ENCODE measurements at regions of chr2 and their contacts with region 1.

Region 1: DNA sequence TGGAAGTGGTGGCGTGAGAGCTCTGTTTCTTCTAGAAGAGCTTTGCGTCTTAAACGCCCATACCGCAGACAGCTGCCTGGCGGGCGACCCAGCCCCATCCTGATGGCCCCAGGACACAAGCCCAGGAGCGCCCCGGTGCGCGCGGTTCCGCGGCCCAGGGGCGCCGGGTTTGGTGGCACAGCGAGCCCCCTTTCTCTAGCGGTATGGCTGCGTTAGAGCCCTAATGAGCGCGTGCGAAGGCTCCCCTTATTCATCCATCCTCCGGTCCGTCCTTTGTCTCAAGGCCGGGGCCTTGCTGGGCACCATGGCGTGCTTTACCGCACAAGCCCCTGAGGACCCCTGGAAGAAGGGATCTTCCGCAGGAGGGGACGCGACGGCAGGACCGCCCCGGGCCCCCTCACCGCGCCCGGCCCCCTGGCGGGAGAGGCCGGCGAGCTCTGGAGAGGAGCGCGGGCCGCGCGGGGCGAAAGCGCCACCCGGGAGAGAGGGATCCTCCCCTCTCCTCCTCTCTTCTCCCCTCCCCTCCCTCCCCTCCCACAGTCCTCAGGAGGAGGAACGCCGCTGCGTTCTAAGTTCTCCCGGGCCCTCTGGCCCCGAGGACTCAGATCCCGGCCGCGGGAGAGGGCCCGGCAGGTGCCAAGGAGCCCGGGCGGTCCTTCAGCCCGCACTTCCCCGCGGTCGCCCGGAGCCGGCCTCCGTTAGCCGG is 626 bp upstream of the SLC1A4 start:
- DNase-seq: peak; percentile 77
- H3K4me3 ChIP-seq: peak overlapping the region; percentile 88
- H3K27ac ChIP-seq: peak overlapping the region; percentile 99
- H3K27me3 ChIP-seq: no peaks in the 10 kb centered on the region
- CTCF ChIP-seq: peak; percentile 54

Region 2: DNA sequence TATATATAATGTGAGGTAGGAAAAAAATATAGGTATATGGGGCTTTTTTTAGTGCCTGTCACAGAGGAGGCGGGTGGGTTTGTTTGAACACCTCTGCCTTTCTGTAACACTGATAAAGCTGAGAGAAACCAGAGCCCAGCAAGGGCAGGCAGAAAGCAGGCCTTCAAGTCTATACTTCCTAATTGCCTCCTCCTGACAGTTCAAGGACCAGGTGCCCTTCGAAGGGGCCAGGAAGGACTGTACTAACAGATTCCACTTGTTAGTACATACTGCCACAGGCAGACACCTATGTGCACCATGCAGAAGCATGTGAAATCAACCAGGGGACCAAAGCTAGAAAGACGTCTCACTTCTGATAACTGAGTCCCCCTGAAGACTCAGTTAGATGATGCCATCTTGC is 14.5 kb after region 1 on chr2:
- CTCF ChIA-PET with region 1: interaction called, 6 read pairs
- POLR2A ChIA-PET with region 1: interaction called, 13 read pairs
- DNase-seq: no peak
- H3K4me3 ChIP-seq: no peak overlapping the region
- H3K27ac ChIP-seq: no peak overlapping the region
- H3K27me3 ChIP-seq: no peaks in the 10 kb centered on the region
- CTCF ChIP-seq: no peak

Region 3: DNA sequence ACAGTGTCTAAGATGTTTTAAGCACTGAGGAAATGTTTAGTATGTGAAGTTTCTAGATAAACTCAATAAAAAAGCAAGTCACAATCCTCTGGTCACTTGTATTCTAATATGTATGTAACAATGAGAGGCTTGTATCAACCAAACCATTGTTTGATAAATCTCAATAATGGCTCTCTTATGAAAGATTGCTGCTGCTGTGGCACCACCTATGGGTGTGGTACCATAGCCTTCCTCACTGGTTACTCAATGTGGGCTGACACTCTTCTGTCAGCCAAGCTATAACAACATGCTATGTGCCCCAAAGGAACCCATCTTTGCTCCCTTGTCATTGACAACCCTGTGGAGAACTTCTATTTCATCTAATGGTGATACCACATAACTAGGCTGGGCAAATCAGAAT is 153.9 kb after region 1 on chr2:
- CTCF ChIA-PET with region 1: no interaction called
- POLR2A ChIA-PET with region 1: no interaction called
- DNase-seq: no peak
- H3K4me3 ChIP-seq: no peak overlapping the region
- H3K27ac ChIP-seq: no peak overlapping the region
- H3K27me3 ChIP-seq: peaks cover 4% of the 10 kb centered on the region
- CTCF ChIP-seq: no peak

Measured in AG04450 (cell line).